Endothelial cell of umbilical vein (primary cell): ENCODE measurements at regions of chr9 and their contacts with region 1.

Region 1: GRCh38 chr9:127734747-127735529 is at the start of gene TOR2A:
- DNase-seq: peak; percentile 98
- H3K4me3 ChIP-seq: peak within 1 kb of the TSS; percentile 23 to 73 (median 38)
- H3K27ac ChIP-seq: peak within 1 kb of the TSS; percentile 68
- H3K4me1 ChIP-seq: peaks cover 12% of the 10 kb centered on the region
- H3K27me3 ChIP-seq: no peaks in the 10 kb centered on the region
- CTCF ChIP-seq: peak; percentile 96 to 97
- POLR2A ChIP-seq: peak; percentile 68
- total RNA-seq, gene TOR2A: 17.1 and 19.3 TPM in 2 replicates

Region 2: DNA sequence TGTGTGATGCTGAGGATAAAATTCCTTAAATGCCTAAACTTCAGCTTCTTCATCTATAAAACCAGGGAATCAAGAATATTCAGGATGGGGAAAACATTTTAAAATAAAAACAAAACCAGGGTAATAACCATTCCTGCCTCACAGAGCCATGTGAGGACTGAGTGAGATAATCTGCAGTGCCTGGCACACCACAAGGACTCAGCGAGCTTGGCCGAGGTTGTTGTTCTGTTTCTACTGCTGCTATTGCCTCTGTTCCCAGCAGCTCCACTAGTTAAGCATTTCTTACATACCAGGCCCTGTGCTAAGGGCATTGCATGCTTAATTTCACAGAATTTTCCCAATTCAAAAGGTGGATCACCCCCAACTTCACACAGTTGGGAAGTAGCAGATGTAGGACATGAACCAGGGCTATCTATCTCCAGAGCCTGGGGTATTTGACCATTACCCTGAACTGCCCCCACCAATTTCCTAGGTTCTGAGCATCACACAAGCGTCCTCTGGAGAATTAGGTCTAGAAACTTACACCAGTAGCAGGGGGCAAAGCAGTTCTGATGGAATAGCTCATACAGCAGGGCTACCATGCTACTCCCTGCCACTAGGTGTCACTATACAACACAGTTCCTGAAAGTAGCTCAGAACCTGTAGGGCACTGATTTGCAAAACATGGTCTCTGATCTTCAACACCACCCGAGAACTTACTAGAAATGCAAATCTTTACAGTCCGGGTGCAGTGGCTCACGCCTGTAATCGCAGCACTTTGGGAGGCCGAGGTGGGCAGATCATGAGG is 209.3 kb before region 1 on chr9:
- CTCF ChIA-PET with region 1: interaction called, 16 read pairs
- POLR2A ChIA-PET with region 1: no interaction called
- dilution Hi-C with region 1: no loop called
- intact Hi-C with region 1: no loop called
- DNase-seq: no peak
- H3K4me3 ChIP-seq: no peak overlapping the region
- H3K27ac ChIP-seq: no peak overlapping the region
- H3K4me1 ChIP-seq: peaks cover 51% of the 10 kb centered on the region
- H3K27me3 ChIP-seq: no peaks in the 10 kb centered on the region
- CTCF ChIP-seq: peak; percentile 53 to 55
- POLR2A ChIP-seq: no peak

Region 3: GRCh38 chr9:127611899-127612790 is 122.8 kb before region 1 on chr9 and contains the start of gene STXBP1:
- CTCF ChIA-PET with region 1: interaction called, 14 read pairs
- POLR2A ChIA-PET with region 1: no interaction called
- dilution Hi-C with region 1: no loop called
- intact Hi-C with region 1: loop called (anchors 1 kb)
- DNase-seq: peak; percentile 82
- H3K4me3 ChIP-seq: peak within 1 kb of the TSS; percentile 59 to 82 (median 79)
- H3K27ac ChIP-seq: no peak within 1 kb of the TSS
- H3K4me1 ChIP-seq: peaks cover 20% of the 10 kb centered on the region
- H3K27me3 ChIP-seq: peaks cover 2 to 3% of the 10 kb centered on the region in 2 experiments
- CTCF ChIP-seq: peak in 1 of 2 donors; percentile 28
- POLR2A ChIP-seq: peak; percentile 85
- total RNA-seq, gene STXBP1: 50.5 and 51.3 TPM in 2 replicates

Region 4: DNA sequence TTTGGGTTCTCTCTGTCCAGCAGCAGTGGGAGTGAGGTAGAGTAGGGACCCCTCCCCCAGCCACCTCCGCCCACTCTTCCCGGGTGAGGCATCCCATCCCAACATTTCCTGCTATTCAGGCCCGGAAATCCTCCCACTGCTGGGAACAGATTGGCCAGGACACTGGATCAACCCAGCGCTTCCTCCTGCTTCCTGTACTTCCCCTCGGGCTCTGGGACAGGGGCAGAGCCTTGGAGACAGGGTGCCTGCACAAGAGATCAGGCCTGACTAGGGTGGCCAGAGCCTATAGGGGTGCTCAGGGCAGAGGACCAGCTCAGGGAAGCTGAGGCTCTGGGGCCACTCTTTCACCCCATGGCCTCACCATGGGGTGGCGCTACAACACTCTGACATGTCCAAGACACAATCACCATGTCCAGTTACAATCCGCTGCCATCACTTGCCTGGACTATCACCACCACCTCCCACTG is 29.0 kb after region 1 on chr9:
- CTCF ChIA-PET with region 1: interaction called, 30 read pairs
- POLR2A ChIA-PET with region 1: interaction called, 3 read pairs
- dilution Hi-C with region 1: no loop called
- intact Hi-C with region 1: loop called (anchors 1 kb)
- DNase-seq: peak; percentile 85
- H3K4me3 ChIP-seq: no peak overlapping the region
- H3K27ac ChIP-seq: peak overlapping the region; percentile 95
- H3K4me1 ChIP-seq: peaks cover 74% of the 10 kb centered on the region
- H3K27me3 ChIP-seq: no peaks in the 10 kb centered on the region
- CTCF ChIP-seq: peak; percentile 64 to 74
- POLR2A ChIP-seq: peak; percentile 92

Region 5: DNA sequence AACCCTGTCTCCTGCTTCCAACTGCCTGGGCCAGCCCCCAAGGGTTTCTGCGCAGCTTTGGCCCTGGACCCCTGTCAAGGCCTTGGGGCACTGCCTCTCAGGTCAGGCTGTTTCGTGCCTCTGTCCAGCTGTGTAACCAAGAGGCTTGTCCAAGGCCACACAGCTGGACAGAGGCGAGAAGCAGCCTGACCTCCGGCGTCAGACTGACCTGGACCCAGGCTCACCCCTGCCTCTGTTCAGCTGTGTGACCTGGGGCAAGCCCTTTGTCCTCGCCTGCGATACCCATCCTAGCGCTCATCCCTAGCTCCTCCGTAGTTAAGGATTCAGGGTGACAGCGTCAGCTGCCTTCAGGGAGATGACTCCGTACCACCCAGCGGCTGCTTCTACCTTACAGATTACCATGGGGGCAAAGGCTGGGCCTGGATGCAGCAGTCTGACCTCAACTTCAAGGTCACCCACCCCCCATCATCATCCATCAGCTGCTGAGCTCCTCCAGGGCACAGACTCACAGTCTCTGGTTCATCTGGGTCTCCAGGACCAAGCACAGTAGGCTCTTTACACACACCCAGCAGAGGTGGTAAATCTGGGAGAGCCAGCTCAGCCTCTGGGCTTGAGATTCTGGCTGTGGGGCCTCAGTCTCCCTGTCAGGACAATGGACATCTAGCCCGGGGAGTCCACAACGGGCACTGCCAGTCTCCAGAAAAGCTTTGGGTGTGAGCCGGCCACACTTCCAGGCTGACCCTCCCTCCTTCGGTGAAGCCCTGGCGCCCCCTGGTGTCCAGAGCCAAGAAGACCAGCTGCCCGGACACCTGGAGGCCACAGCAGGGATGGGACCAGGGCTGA is 134.6 kb after region 1 on chr9:
- CTCF ChIA-PET with region 1: interaction called, 41 read pairs
- POLR2A ChIA-PET with region 1: no interaction called
- dilution Hi-C with region 1: no loop called
- intact Hi-C with region 1: loop called (anchors 1 kb)
- DNase-seq: peak; percentile 78
- H3K4me3 ChIP-seq: no peak overlapping the region
- H3K27ac ChIP-seq: no peak overlapping the region
- H3K4me1 ChIP-seq: peaks cover 17% of the 10 kb centered on the region
- H3K27me3 ChIP-seq: no peaks in the 10 kb centered on the region
- CTCF ChIP-seq: peak; percentile 91 to 95
- POLR2A ChIP-seq: no peak

Region 6: DNA sequence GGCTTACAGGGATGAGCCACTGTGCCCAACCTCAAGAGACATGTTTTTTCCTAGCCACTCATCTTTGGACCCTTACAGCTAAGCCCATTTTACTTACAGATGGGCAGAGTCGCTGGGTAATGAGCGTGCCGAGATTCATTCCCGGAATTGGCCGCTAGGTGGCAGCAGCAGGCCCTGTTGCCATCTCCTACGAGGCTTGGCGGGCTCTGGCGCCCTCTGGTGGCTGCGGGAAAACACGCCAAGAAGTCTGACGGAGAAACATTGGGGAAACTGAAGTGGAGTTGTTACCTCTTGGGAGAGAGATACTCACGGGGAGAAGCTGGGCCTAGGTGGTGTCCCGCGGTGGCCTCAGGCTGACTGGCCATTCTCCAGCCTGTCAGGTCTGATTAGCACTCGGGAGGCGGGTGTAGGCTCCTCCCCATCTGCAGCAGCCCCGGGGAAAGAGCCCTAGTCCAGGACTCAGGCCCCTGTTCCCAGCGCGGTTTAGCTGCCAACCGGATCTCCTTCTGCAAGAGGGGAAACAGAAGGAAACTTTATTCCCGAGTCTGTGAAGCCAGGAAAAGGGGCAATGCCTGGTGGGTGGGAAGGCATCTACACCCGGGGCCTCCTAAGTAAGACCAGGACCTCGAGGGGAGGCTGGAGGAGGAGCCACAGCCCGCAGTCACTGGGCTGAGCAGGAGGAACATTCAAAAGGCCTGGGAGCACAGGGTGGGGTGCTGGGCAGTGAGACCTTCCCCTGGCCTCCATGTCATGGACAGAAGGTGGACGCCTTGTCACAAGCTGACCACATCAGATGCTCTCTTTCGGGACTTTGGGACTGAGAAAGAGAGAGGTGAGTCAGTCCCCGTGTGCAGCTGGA is 382.9 kb after region 1 on chr9:
- CTCF ChIA-PET with region 1: no interaction called
- POLR2A ChIA-PET with region 1: no interaction called
- dilution Hi-C with region 1: no loop called
- intact Hi-C with region 1: no loop called
- DNase-seq: peak; percentile 93
- H3K4me3 ChIP-seq: no peak overlapping the region
- H3K27ac ChIP-seq: no peak overlapping the region
- H3K4me1 ChIP-seq: no peaks in the 10 kb centered on the region
- H3K27me3 ChIP-seq: no peaks in the 10 kb centered on the region
- CTCF ChIP-seq: peak; percentile 100
- POLR2A ChIP-seq: no peak